Activated B cell treated with CpG ODN at 0.5 μM for 24 hours (primary cell): ENCODE measurements at regions of chr3 and their contacts with region 1.

Region 1: GRCh38 chr3:46321461-46322104 is 32.3 kb upstream of the CCR2 start:
- DNase-seq: no peak
- ATAC-seq: peak; percentile 76
- H3K4me3 Mint-ChIP-seq: peak overlapping the region; percentile 52
- H3K27ac Mint-ChIP-seq: peak overlapping the region; percentile 19
- H3K4me1 Mint-ChIP-seq: peaks cover 55% of the 10 kb centered on the region
- H3K27me3 Mint-ChIP-seq: no peaks in the 10 kb centered on the region
- CTCF ChIP-seq: no peak

Region 2: DNA sequence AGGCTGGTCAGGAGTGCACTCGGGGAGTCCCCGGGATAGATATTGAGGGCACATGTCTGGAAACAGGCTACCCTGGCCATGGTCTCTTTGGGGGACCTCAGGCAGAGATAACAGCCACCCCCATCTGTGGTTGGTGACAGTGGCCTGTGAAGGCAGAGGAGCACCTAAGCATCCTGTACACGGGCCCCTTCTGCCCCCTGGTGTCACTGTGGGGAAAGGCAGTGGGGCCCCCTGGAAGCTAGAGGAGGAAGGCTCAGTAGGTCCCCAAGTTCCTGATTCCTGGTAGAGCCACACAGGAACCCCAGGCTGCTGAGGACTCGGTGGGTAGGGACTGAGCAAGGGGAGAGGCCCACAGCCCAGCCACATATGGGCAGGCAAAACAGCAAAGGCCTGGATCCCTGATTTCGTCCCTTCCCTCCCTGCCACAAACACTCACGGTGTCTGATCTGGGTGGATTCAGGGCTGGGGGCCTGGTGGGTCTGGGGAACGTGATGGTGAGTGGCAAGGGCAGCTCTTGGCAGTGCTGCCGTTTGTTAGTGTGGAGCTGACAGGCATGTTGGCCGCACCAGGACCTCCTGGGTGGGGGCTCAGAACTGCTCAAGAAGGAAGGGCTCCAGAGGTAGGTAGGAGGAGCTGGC is 392.4 kb before region 1 on chr3:
- CTCF ChIA-PET with region 1: no interaction called
- POLR2A ChIA-PET with region 1: no interaction called
- intact Hi-C with region 1: no loop called
- DNase-seq: peak; percentile 54
- ATAC-seq: peak; percentile 92
- H3K4me3 Mint-ChIP-seq: no peak overlapping the region
- H3K27ac Mint-ChIP-seq: no peak overlapping the region
- H3K4me1 Mint-ChIP-seq: no peaks in the 10 kb centered on the region
- H3K27me3 Mint-ChIP-seq: no peaks in the 10 kb centered on the region
- CTCF ChIP-seq: no peak

Region 3: DNA sequence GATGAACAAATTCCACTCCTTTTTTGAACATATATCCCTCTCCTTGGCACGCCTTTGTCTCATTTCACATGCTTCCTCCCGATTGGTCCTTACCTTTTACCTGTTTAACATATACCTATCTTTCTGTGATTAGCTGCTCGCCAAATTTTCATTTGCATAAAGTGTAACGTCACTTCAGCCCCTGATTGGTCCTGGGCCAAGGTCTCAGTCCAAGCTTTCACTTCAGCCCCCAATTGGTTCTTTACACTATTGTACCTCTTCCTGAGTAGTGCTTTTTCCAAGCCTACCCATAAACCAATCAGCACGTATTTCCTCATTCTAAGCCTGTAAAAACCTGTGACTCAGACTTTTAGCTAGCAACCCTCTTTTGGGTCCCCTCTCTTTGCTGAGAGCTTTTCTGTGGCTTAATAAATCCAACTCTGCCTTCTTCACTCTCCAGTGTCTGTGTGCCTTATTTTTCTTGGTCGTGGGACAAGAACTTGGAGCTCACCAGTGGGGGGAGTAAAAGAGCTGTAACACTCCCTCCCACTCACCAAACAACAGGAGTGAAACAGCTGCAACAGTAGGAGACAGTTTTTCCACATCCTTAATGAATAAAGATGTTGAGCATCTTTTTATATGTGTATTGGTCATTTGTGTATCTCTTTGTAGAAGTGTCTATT is 293.7 kb before region 1 on chr3:
- CTCF ChIA-PET with region 1: no interaction called
- POLR2A ChIA-PET with region 1: no interaction called
- intact Hi-C with region 1: no loop called
- DNase-seq: no peak
- ATAC-seq: no peak
- H3K4me3 Mint-ChIP-seq: no peak overlapping the region
- H3K27ac Mint-ChIP-seq: no peak overlapping the region
- H3K4me1 Mint-ChIP-seq: peaks cover 16% of the 10 kb centered on the region
- H3K27me3 Mint-ChIP-seq: no peaks in the 10 kb centered on the region
- CTCF ChIP-seq: no peak

Region 4: GRCh38 chr3:46286947-46287565 is 34.5 kb before region 1 on chr3:
- CTCF ChIA-PET with region 1: no interaction called
- POLR2A ChIA-PET with region 1: no interaction called
- intact Hi-C with region 1: no loop called
- DNase-seq: no peak
- ATAC-seq: no peak
- H3K4me3 Mint-ChIP-seq: no peak overlapping the region
- H3K27ac Mint-ChIP-seq: no peak overlapping the region
- H3K4me1 Mint-ChIP-seq: peaks cover 21% of the 10 kb centered on the region
- H3K27me3 Mint-ChIP-seq: no peaks in the 10 kb centered on the region
- CTCF ChIP-seq: no peak

Region 5: DNA sequence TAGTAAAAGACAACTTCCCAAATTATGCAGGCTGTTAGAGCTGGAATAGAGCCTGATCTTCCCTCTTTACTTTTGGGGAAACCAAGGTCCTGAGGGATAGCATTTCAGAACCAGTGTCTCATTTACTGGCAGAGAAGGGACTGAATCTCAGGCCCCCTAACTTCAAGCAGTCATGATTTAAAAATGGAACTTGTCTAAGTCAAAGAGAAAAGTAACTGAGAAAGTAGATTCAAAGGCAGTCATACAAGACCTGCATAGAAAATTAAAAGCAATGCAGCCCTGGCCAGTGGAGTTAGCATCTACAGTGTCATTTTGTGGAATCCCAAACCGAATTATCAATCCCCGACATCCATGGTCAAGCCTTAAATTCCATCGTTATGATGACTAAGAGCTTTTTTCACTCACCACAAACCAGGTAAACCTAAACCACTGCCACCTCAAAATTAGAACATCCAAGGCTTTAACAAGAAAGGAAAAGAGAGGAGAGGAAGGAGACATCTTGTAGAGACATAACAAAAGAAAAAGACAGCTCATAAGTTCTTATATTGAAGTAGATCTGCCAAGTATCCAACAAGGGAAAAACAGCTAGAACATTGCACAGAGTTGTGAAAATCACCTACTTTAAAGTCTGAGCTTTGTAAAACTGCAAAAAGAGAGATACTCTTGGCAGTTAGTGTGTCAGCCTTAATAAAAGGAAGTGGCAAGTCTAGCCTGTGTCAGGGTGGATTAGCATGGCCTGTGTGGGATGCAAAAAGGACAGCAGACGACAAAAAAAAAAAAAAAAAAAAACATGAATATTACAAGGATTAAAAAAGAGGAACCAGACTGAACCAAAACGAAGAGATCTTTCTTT is 21.7 kb before region 1 on chr3:
- CTCF ChIA-PET with region 1: no interaction called
- POLR2A ChIA-PET with region 1: interaction called, 3 read pairs
- intact Hi-C with region 1: loop called (anchors 2 kb)
- DNase-seq: no peak
- ATAC-seq: peak; percentile 79
- H3K4me3 Mint-ChIP-seq: no peak overlapping the region
- H3K27ac Mint-ChIP-seq: peak overlapping the region; percentile 2
- H3K4me1 Mint-ChIP-seq: peaks cover 56% of the 10 kb centered on the region
- H3K27me3 Mint-ChIP-seq: no peaks in the 10 kb centered on the region
- CTCF ChIP-seq: no peak

Region 6: DNA sequence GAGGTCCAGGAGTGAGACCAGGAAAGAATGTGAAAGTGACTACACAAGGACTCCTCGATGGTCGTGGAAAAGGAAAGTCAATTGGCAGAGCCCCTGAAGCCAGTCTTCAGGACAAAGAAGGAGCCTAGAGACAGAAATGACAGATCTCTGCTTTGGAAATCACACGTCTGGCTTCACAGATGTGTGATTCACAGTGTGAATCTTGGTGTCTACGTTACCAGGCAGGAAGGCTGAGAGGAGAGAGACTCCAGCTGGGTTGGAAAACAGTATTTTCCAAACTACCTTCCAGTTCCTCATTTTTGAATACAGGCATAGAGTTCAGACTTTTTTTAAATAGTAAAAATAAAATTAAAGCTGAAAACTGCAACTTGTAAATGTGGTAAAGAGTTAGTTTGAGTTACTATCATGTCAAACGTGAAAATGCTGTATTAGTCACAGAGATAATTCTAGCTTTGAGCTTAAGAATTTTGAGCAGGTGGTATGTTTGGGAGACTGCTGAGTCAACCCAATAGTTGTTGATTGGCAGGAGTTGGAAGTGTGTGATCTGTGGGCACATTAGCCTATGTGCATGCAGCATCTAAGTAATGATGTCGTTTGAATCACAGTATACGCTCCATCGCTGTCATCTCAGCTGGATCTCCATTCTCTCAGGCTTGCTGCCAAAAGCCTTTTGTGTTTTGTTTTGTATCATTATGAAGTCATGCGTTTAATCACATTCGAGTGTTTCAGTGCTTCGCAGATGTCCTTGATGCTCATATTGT is 38.3 kb after region 1 on chr3:
- CTCF ChIA-PET with region 1: no interaction called
- POLR2A ChIA-PET with region 1: no interaction called
- intact Hi-C with region 1: loop called (anchors 5 kb)
- DNase-seq: no peak
- ATAC-seq: peak; percentile 49
- H3K4me3 Mint-ChIP-seq: no peak overlapping the region
- H3K27ac Mint-ChIP-seq: no peak overlapping the region
- H3K4me1 Mint-ChIP-seq: peaks cover 53% of the 10 kb centered on the region
- H3K27me3 Mint-ChIP-seq: no peaks in the 10 kb centered on the region
- CTCF ChIP-seq: no peak